ENCODE measurements at regions of chr5 and their contacts with region 1.

Region 1: DNA sequence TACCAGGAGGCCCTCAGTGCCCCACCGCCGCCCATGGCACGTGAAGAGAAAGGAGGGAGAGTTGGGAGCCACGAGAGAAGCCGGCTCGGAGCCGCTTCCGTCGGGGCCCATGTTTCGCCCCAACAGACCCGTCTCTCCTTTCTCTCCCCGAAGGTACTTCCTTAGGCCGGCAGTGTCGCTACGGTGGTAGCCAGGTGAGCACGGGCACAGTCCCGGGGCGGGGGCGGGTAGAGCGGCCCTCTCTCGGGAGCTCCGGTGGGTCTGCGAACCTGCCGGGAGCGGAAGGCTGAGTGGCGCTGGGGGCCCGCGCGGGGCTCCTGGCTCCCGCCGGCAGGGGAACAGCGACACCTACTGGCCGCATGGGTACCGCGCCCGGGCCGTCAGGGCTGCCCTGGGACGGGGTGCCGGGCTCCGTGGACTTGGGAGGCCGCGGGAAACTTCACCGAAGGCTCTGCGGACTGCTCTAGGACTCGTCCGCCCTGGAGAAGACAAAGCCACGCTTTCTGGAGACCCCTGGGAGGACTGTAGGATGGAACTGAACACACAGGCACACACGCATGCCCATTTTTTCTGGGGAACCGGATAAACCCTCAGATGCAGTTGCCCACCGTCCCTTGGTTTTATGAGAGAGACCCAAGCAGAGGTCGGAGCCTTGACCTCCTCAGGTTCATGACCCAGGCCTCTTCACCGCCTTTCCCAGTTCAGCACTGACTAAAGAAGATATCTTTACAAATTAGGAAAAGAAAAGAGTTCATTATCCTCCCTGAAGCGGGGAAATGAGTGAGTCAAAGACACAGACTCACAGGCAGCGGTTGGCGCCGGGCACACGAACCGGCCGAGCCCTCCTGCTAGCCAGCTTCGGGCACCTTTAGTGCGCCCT is 202.5 kb downstream of the MEF2C start:
- DNase-seq: peak; percentile 88
- ATAC-seq: peak; percentile 89
- H3K4me3 Mint-ChIP-seq: peak overlapping the region; percentile 19
- H3K27ac Mint-ChIP-seq: no peak overlapping the region
- H3K4me1 Mint-ChIP-seq: peaks cover 17% of the 10 kb centered on the region
- H3K27me3 Mint-ChIP-seq: peaks cover 69% of the 10 kb centered on the region

Region 2: DNA sequence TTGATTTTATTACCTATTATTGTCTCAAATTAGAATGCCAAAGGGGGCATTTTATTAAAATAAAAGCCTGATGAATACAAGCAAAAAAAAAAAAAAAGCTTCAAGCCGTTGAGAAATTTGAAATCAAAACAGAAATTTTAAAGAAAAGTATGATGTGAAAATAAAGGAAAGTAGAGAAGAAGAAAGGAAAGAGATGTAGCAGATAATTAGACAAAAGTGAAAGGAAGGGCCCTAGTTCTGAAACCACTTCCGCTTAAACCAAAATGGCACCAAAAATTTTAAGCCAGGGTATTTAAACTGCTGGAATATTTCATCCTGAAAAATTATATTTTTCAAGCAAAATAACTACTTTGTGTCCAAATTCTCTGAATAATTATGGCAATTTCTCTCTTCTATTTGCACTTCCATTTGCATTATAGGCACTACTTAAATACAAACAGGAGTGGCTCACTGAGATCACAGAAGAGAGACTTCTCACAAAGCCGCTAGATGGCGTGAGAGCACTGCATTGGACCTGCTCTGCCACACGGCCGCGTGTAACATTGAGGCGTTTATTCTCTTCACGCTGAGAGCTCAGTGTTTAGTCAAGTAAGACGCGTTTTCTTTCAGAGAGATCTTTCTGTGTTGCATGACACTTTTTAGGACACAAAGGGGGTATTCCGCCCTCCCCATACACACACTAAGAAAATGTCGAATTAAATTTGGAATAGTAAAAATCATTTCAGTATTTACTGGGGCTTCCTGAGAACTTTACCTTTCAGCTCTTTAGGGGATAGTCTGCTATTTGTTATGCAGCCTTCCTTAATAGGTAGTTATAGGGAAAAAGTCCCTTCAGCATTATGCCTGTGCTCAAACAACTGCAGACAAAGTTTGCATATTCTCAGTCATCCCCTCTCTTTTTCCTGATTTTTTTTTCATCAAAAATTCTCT is 899.4 kb before region 1 on chr5:
- CTCF ChIA-PET with region 1: interaction called, 19 read pairs
- POLR2A ChIA-PET with region 1: no interaction called
- intact Hi-C with region 1: loop called (anchors 1 kb)
- DNase-seq: peak; percentile 88
- ATAC-seq: peak; percentile 96
- H3K4me3 Mint-ChIP-seq: no peak overlapping the region
- H3K27ac Mint-ChIP-seq: no peak overlapping the region
- H3K4me1 Mint-ChIP-seq: no peaks in the 10 kb centered on the region
- H3K27me3 Mint-ChIP-seq: peaks cover 18% of the 10 kb centered on the region

Region 3: GRCh38 chr5:88085462-88085861 is 595.0 kb before region 1 on chr5:
- CTCF ChIA-PET with region 1: no interaction called
- POLR2A ChIA-PET with region 1: no interaction called
- intact Hi-C with region 1: no loop called
- DNase-seq: no peak
- ATAC-seq: no peak
- H3K4me3 Mint-ChIP-seq: no peak overlapping the region
- H3K27ac Mint-ChIP-seq: no peak overlapping the region
- H3K4me1 Mint-ChIP-seq: no peaks in the 10 kb centered on the region
- H3K27me3 Mint-ChIP-seq: peaks cover 10% of the 10 kb centered on the region

Region 4: GRCh38 chr5:88268385-88269184 is 411.9 kb before region 1 on chr5 and contains the start of gene TMEM161B:
- CTCF ChIA-PET with region 1: no interaction called
- POLR2A ChIA-PET with region 1: no interaction called
- intact Hi-C with region 1: loop called in 1 of 2 experiments (anchors 5 kb)
- DNase-seq: peak; percentile 96
- ATAC-seq: peak; percentile 98
- H3K4me3 Mint-ChIP-seq: peak within 1 kb of the TSS; percentile 95
- H3K27ac Mint-ChIP-seq: peak within 1 kb of the TSS; percentile 96
- H3K4me1 Mint-ChIP-seq: peaks cover 48% of the 10 kb centered on the region
- H3K27me3 Mint-ChIP-seq: no peaks in the 10 kb centered on the region
- total RNA-seq, gene TMEM161B: 20.1 to 24.0 TPM

Region 5: GRCh38 chr5:88438011-88438410 is 242.5 kb before region 1 on chr5:
- CTCF ChIA-PET with region 1: no interaction called
- POLR2A ChIA-PET with region 1: no interaction called
- intact Hi-C with region 1: no loop called
- DNase-seq: no peak
- ATAC-seq: no peak
- H3K4me3 Mint-ChIP-seq: no peak overlapping the region
- H3K27ac Mint-ChIP-seq: no peak overlapping the region
- H3K4me1 Mint-ChIP-seq: no peaks in the 10 kb centered on the region
- H3K27me3 Mint-ChIP-seq: peaks cover 11% of the 10 kb centered on the region

Region 6: GRCh38 chr5:88666761-88667495 is 13.6 kb before region 1 on chr5:
- CTCF ChIA-PET with region 1: interaction called, 3 read pairs
- POLR2A ChIA-PET with region 1: no interaction called
- intact Hi-C with region 1: loop called in 1 of 2 experiments (anchors 1 kb)
- DNase-seq: peak; percentile 12
- ATAC-seq: peak; percentile 36
- H3K4me3 Mint-ChIP-seq: peak overlapping the region; percentile 64
- H3K27ac Mint-ChIP-seq: no peak overlapping the region
- H3K4me1 Mint-ChIP-seq: peaks cover 27% of the 10 kb centered on the region
- H3K27me3 Mint-ChIP-seq: peaks cover 74% of the 10 kb centered on the region

Region 7: GRCh38 chr5:88883059-88883835 is 202.8 kb after region 1 on chr5 and contains the start of gene MEF2C:
- CTCF ChIA-PET with region 1: no interaction called
- POLR2A ChIA-PET with region 1: no interaction called
- intact Hi-C with region 1: loop called in 1 of 2 experiments (anchors 10 kb)
- DNase-seq: peak; percentile 32
- ATAC-seq: peak; percentile 65
- H3K4me3 Mint-ChIP-seq: peak within 1 kb of the TSS; percentile 75
- H3K27ac Mint-ChIP-seq: no peak within 1 kb of the TSS
- H3K4me1 Mint-ChIP-seq: peaks cover 21% of the 10 kb centered on the region
- H3K27me3 Mint-ChIP-seq: peaks cover 48% of the 10 kb centered on the region
- total RNA-seq, gene MEF2C: 0.07 to 0.12 TPM